Mammary epithelial cell (primary cell): ENCODE measurements at regions of chr1 and their contacts with region 1.

Region 1: GRCh38 chr1:113677250-113678158 is 81.8 kb downstream of the PHTF1 start:
- DNase-seq: peak; percentile 11
- H3K4me3 ChIP-seq: no peak overlapping the region
- H3K27ac ChIP-seq: no peak overlapping the region
- H3K4me1 ChIP-seq: no peaks in the 10 kb centered on the region
- H3K27me3 ChIP-seq: no peaks in the 10 kb centered on the region
- CTCF ChIP-seq: peak; percentile 31 to 55

Region 2: DNA sequence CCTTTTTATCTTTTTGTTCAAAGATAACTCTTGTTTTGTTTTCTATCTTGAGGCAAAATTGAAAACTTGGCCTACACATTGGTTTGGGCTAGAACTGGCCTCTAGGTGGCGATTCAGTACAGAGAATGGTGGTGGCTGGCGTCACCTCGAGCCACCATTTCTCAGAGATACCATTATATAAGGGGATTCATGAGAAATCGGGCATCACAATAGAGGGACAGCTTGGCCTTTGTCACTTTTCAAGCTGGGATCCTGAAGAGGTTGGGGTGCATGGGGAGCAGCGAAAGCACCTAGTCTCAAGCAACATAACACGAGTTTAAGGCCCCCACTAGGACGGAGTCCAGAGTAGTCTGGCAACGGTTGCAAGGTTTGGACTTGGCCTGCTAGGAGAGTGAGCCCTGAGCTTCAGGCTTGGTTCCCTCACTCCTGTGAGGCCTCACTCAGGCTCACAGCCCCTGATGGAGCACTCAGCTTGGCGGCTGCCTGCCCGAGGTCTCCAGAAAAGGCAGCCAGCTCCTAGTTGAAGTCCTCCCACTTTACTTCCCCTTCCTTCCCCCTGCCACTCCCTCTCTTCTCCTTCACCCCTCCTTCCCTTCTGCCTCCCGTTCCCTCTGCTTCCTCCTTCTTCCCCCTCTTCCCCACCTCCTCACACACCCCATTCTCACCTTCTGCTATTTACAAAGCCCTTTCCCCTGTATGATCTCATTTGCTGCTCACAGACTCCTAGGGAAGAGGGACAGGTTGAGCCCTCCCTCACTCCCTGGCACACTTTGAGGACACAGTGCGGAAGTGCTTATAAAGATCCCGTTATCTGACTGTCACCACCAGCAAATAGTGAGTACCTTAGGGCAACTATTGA is 536.7 kb before region 1 on chr1:
- CTCF ChIA-PET with region 1: interaction called, 7 read pairs
- dilution Hi-C with region 1: no loop called
- in situ Hi-C with region 1: loop called (anchors 10 kb)
- intact Hi-C with region 1: loop called (anchors 1 kb)
- DNase-seq: peak; percentile 32
- H3K4me3 ChIP-seq: no peak overlapping the region
- H3K27ac ChIP-seq: no peak overlapping the region
- H3K4me1 ChIP-seq: peaks cover 22% of the 10 kb centered on the region
- H3K27me3 ChIP-seq: no peaks in the 10 kb centered on the region
- CTCF ChIP-seq: peak; percentile 87 to 93

Region 3: DNA sequence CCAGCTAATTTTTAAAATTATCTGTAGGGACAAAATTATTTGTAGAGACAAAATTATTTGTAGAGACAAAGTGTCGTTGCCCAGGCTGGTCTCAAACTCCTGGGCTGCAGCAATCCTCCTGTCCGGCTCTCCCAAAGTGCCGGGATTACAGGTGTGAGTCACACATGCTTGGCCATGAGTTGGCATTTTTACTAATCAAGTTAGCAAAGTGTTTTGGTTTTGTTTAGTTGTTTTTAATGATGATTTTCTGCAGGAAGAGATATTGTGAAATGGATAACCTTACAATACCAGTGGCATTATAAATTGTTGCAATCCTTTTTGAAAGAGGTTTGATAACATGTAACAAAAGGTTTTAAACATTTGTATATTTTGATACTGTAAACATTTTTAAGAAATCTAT is 352.5 kb before region 1 on chr1:
- CTCF ChIA-PET with region 1: no interaction called
- dilution Hi-C with region 1: no loop called
- in situ Hi-C with region 1: no loop called
- intact Hi-C with region 1: loop called (anchors 5 kb)
- DNase-seq: peak; percentile 73
- H3K4me3 ChIP-seq: no peak overlapping the region
- H3K27ac ChIP-seq: peak overlapping the region; percentile 13
- H3K4me1 ChIP-seq: peaks cover 19% of the 10 kb centered on the region
- H3K27me3 ChIP-seq: no peaks in the 10 kb centered on the region
- CTCF ChIP-seq: no peak

Region 4: GRCh38 chr1:113452921-113453770 is 224.4 kb before region 1 on chr1:
- CTCF ChIA-PET with region 1: interaction called, 4 read pairs
- dilution Hi-C with region 1: no loop called
- in situ Hi-C with region 1: no loop called
- intact Hi-C with region 1: loop called (anchors 2 kb)
- DNase-seq: peak; percentile 22
- H3K4me3 ChIP-seq: no peak overlapping the region
- H3K27ac ChIP-seq: no peak overlapping the region
- H3K4me1 ChIP-seq: peaks cover 17% of the 10 kb centered on the region
- H3K27me3 ChIP-seq: no peaks in the 10 kb centered on the region
- CTCF ChIP-seq: peak; percentile 58 to 74

Region 5: DNA sequence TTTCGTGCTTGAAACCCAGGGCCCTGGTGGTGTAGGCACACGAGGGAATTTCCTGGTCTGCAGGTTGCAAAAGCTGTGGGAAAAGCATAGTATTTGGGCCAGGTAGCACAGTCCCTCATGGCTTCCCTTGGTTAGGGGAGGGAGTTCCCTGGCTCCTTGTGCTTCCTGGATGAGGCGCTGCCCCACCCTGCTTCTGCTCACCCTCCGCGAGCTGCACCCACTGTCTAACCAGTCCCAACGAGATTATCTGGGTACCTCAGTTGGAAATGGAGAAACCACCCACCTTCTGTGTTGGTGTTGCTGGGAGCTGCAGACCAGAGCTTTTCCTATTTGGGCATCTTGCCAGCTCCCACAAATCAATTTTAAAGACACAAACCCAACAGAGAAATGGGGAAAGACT is 101.2 kb before region 1 on chr1:
- CTCF ChIA-PET with region 1: no interaction called
- dilution Hi-C with region 1: no loop called
- in situ Hi-C with region 1: no loop called
- intact Hi-C with region 1: no loop called
- DNase-seq: no peak
- H3K4me3 ChIP-seq: no peak overlapping the region
- H3K27ac ChIP-seq: no peak overlapping the region
- H3K4me1 ChIP-seq: no peaks in the 10 kb centered on the region
- H3K27me3 ChIP-seq: no peaks in the 10 kb centered on the region
- CTCF ChIP-seq: no peak

Region 6: DNA sequence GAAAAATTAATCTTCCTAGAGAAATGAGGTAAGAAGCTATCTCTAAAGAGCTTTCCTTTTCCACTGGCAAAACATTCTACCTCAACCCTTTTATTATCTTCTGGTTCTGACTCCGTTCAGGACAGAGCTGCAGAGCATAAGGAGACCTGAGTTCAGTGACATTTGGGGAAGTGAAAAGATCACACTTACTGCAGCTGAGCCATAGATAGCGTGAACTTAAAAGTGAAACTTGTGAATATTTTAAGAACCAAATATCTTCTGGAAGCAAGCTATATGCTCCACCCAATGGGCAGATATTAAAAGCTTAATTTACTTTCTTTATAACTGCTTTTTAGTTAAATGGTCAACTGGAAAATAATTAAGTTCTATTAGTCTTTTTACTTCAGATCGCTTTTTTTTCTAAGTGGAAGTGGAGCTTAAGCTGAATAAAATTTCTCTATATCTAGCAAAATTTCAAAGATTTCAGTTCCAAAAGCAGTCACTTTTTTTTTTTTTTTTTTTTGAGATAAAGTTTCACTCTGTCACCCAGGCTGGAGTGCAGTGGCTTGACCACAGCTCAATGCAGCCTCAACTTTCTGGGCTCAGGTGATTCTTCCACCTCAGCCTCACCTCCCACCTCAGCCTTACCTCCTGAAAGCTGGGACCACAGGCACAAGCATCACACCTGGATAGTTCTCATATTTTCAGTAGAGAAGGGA is 182.1 kb after region 1 on chr1:
- CTCF ChIA-PET with region 1: no interaction called
- dilution Hi-C with region 1: no loop called
- in situ Hi-C with region 1: no loop called
- intact Hi-C with region 1: no loop called
- DNase-seq: no peak
- H3K4me3 ChIP-seq: no peak overlapping the region
- H3K27ac ChIP-seq: no peak overlapping the region
- H3K4me1 ChIP-seq: peaks cover 10% of the 10 kb centered on the region
- H3K27me3 ChIP-seq: no peaks in the 10 kb centered on the region
- CTCF ChIP-seq: no peak